Thyroid gland (tissue), 4 donors: ENCODE measurements at regions of chr1 and their contacts with region 1.

Region 1: DNA sequence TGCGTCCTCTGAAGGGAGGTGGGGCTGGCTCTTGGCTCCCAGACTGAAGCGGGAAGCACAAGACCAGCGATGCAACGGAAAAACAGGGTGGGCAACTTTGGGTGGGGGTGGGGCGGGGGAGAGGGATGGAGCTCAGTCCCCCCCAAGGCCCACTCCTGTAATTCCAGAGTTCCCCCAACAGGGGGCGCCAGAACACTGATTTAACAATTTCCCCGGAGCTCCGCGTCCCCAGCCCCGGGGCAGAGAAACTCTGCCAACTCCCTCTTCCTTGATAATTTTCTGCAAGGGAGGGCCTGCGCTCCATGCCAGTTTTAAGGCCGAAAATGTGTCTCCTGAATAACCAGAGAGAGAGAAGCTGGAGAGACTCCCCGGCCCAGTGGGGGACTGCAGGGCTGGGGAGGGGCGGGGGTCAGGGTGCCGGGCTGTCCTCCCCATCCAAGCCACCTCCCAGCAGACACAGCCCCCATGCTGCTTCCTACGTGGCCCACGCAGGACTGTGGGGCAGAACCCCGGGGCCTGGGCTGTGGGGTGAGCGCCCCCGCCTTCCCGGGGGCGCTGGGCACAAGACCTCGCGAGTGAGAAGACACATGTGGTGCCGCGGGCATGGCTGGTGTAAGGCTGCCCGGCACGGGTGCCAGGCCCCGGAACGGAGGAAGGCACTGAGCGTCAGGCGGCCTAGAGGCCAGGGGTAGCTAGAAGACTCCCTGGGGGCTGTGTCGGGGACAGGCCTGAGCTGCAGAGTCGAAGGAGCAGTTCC is 51.4 kb downstream of the KIF21B start:
- DNase-seq: peak; percentile 51 to 57
- H3K4me3 ChIP-seq: no peak overlapping the region
- H3K27ac ChIP-seq: no peak overlapping the region
- H3K4me1 ChIP-seq: no peaks in the 10 kb centered on the region
- H3K27me3 ChIP-seq: no peaks in the 10 kb centered on the region
- CTCF ChIP-seq: peak; percentile 47 to 91 (median 60)
- POLR2A ChIP-seq: no peak

Region 2: DNA sequence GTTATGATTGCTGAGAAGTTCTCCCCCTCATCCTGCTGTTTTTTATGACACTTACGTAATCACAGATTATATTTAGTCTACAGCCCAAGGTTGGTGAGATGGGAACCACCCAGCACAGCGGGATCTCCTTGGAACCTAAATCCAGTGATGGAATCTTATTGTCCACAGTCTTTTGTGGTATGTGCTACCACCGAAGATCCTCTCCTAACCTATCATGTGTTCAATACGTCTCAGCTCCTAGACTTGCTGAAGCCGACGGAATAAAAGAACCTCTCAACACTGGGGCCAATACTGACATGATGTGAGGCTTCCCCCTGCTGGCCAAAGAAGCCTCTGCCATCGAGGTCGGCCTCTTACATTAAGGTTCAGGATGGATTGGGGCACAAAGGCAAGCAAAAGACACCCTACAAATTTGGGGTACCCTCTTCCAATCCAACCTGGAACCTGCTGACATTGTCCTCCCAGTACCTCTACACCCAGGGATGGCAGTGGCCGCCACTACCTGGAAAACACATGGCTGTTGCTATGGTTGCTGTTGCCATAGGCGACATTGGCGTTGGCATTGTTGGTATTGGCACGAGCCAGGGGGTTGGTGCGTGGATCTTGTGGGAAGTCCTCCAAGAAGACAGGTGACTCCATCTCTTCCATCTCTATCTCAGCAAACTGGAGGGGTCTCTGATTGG is 70.8 kb after region 1 on chr1:
- intact Hi-C with region 1: loop called (anchors 2 kb)
- DNase-seq: peak; percentile 55
- H3K4me3 ChIP-seq: no peak overlapping the region
- H3K27ac ChIP-seq: no peak overlapping the region
- H3K4me1 ChIP-seq: no peaks in the 10 kb centered on the region
- H3K27me3 ChIP-seq: no peaks in the 10 kb centered on the region
- CTCF ChIP-seq: peak in 5 of 6 experiments; percentile 52 to 85 (median 70)
- POLR2A ChIP-seq: no peak

Region 3: GRCh38 chr1:201114236-201115131 is 142.4 kb after region 1 on chr1:
- intact Hi-C with region 1: loop called (anchors 2 kb)
- DNase-seq: peak; percentile 89 to 93
- H3K4me3 ChIP-seq: peak overlapping the region in 2 of 3 donors; percentile 42 to 47
- H3K27ac ChIP-seq: peak overlapping the region in 1 of 3 donors; percentile 32
- H3K4me1 ChIP-seq: peaks cover 0 to 4% of the 10 kb centered on the region in 2 donors
- H3K27me3 ChIP-seq: no peaks in the 10 kb centered on the region
- CTCF ChIP-seq: peak; percentile 60 to 85 (median 80)
- POLR2A ChIP-seq: peak in 1 of 2 donors; percentile 55

Region 4: GRCh38 chr1:201214461-201214860 is 242.3 kb after region 1 on chr1:
- intact Hi-C with region 1: loop called (anchors 10 kb)
- DNase-seq: no peak
- H3K4me3 ChIP-seq: no peak overlapping the region
- H3K27ac ChIP-seq: no peak overlapping the region
- H3K4me1 ChIP-seq: no peaks in the 10 kb centered on the region
- H3K27me3 ChIP-seq: no peaks in the 10 kb centered on the region
- CTCF ChIP-seq: no peak
- POLR2A ChIP-seq: no peak